Naive thymus-derived CD4-positive, alpha-beta T cell (primary cell): ENCODE measurements at regions of chr2 and their contacts with region 1.

Region 1: DNA sequence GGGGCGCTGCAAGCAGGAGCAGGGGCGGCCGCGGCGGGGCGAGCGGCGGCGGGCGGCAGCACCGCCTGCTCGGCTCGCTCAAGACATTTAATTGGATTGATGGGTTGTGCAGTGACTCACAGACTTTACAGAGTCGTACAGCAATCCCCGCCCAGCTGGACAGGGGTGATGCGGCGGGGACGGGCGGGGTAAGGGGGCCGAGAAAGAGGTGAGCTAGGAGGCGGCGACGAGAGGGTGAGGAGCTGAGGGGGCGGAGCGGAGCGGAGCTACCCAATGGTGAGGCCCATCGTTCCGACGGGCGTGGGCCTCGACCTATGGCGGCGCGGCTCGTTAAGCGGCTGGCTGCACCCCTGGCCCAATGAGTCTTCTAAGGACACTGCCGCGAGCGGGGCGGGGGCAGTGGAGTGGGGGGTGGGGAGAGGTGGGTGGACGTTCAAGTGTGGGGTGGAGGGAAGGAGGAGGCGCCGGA is 97.1 kb upstream of the SERTAD2 start:
- DNase-seq: peak in 8 of 9 donors; percentile 87 to 97 (median 96)
- ATAC-seq: peak; percentile 90
- H3K4me3 ChIP-seq: peak overlapping the region; percentile 98
- H3K4me3 Mint-ChIP-seq: peak overlapping the region; percentile 91 to 100 (median 99)
- H3K27ac ChIP-seq: peak overlapping the region; percentile 91
- H3K27ac Mint-ChIP-seq: peak overlapping the region; percentile 91 to 99 (median 96)
- H3K4me1 ChIP-seq: peaks cover 3 to 13% of the 10 kb centered on the region in 2 donors
- H3K4me1 Mint-ChIP-seq: peaks cover 5 to 34% (median 29%) of the 10 kb centered on the region in 7 donors
- H3K27me3 ChIP-seq: no peaks in the 10 kb centered on the region
- H3K27me3 Mint-ChIP-seq: no peaks in the 10 kb centered on the region

Region 2: GRCh38 chr2:64144057-64145013 is 606.5 kb before region 1 on chr2 and contains the start of gene PELI1:
- CTCF ChIA-PET with region 1: no interaction called
- POLR2A ChIA-PET with region 1: no interaction called
- intact Hi-C with region 1: loop called (anchors 1 to 2 kb)
- DNase-seq: peak; percentile 82 to 95 (median 88)
- ATAC-seq: peak; percentile 97
- H3K4me3 ChIP-seq: peak within 1 kb of the TSS; percentile 88
- H3K4me3 Mint-ChIP-seq: peak within 1 kb of the TSS in 9 of 10 donors; percentile 87 to 98 (median 93)
- H3K27ac ChIP-seq: peak within 1 kb of the TSS; percentile 98
- H3K27ac Mint-ChIP-seq: peak within 1 kb of the TSS; percentile 93 to 99 (median 96)
- H3K4me1 ChIP-seq: peaks cover 11 to 24% of the 10 kb centered on the region in 2 donors
- H3K4me1 Mint-ChIP-seq: peaks cover 19 to 33% (median 31%) of the 10 kb centered on the region in 7 donors
- H3K27me3 ChIP-seq: no peaks in the 10 kb centered on the region
- H3K27me3 Mint-ChIP-seq: no peaks in the 10 kb centered on the region
- total RNA-seq, gene PELI1: 33.4 to 170 (median 57.2) TPM

Region 3: GRCh38 chr2:64295326-64296139 is 455.3 kb before region 1 on chr2:
- CTCF ChIA-PET with region 1: no interaction called
- POLR2A ChIA-PET with region 1: no interaction called
- intact Hi-C with region 1: no loop called
- DNase-seq: peak in 1 of 9 donors; percentile 45
- ATAC-seq: no peak
- H3K4me3 ChIP-seq: no peak overlapping the region
- H3K4me3 Mint-ChIP-seq: no peak overlapping the region
- H3K27ac ChIP-seq: no peak overlapping the region
- H3K27ac Mint-ChIP-seq: peak overlapping the region in 1 of 9 donors; percentile 9
- H3K4me1 ChIP-seq: no peaks in the 10 kb centered on the region
- H3K4me1 Mint-ChIP-seq: peaks cover 0 to 16% (median 4%) of the 10 kb centered on the region in 7 donors
- H3K27me3 ChIP-seq: no peaks in the 10 kb centered on the region
- H3K27me3 Mint-ChIP-seq: peaks cover 0 to 22% (median 4%) of the 10 kb centered on the region in 5 donors

Region 4: GRCh38 chr2:64666810-64667438 is 83.9 kb before region 1 on chr2:
- CTCF ChIA-PET with region 1: interaction called, 6 read pairs
- POLR2A ChIA-PET with region 1: interaction called, 66 read pairs
- intact Hi-C with region 1: no loop called
- DNase-seq: peak in 3 of 9 donors; percentile 43 to 51 (median 51)
- ATAC-seq: peak; percentile 61
- H3K4me3 ChIP-seq: peak overlapping the region; percentile 12
- H3K4me3 Mint-ChIP-seq: peak overlapping the region in 9 of 10 donors; percentile 3 to 76 (median 64)
- H3K27ac ChIP-seq: peak overlapping the region; percentile 58
- H3K27ac Mint-ChIP-seq: peak overlapping the region in 3 of 9 donors; percentile 71 to 91 (median 85)
- H3K4me1 ChIP-seq: peaks cover 15 to 55% of the 10 kb centered on the region in 2 donors
- H3K4me1 Mint-ChIP-seq: peaks cover 28 to 46% (median 35%) of the 10 kb centered on the region in 7 donors
- H3K27me3 ChIP-seq: no peaks in the 10 kb centered on the region
- H3K27me3 Mint-ChIP-seq: no peaks in the 10 kb centered on the region

Region 5: GRCh38 chr2:64738026-64738425 is 12.8 kb before region 1 on chr2:
- CTCF ChIA-PET with region 1: interaction called, 5 read pairs
- POLR2A ChIA-PET with region 1: interaction called, 23 read pairs
- intact Hi-C with region 1: loop called (anchors 1 kb)
- DNase-seq: no peak
- ATAC-seq: no peak
- H3K4me3 ChIP-seq: no peak overlapping the region
- H3K4me3 Mint-ChIP-seq: peak overlapping the region in 1 of 10 donors; percentile 24
- H3K27ac ChIP-seq: no peak overlapping the region
- H3K27ac Mint-ChIP-seq: peak overlapping the region in 3 of 9 donors; percentile 2 to 72 (median 18)
- H3K4me1 ChIP-seq: no peaks in the 10 kb centered on the region
- H3K4me1 Mint-ChIP-seq: peaks cover 4 to 45% (median 37%) of the 10 kb centered on the region in 7 donors
- H3K27me3 ChIP-seq: no peaks in the 10 kb centered on the region
- H3K27me3 Mint-ChIP-seq: no peaks in the 10 kb centered on the region

Region 6: GRCh38 chr2:64865073-64865830 is 114.4 kb after region 1 on chr2:
- CTCF ChIA-PET with region 1: interaction called, 3 read pairs
- POLR2A ChIA-PET with region 1: no interaction called
- intact Hi-C with region 1: loop called (anchors 1 to 2 kb)
- DNase-seq: peak; percentile 30 to 82 (median 72)
- ATAC-seq: peak; percentile 87
- H3K4me3 ChIP-seq: peak overlapping the region; percentile 88
- H3K4me3 Mint-ChIP-seq: peak overlapping the region in 7 of 10 donors; percentile 72 to 86 (median 81)
- H3K27ac ChIP-seq: peak overlapping the region; percentile 40
- H3K27ac Mint-ChIP-seq: no peak overlapping the region
- H3K4me1 ChIP-seq: peaks cover 0 to 5% of the 10 kb centered on the region in 2 donors
- H3K4me1 Mint-ChIP-seq: peaks cover 0 to 5% (median 0%) of the 10 kb centered on the region in 7 donors
- H3K27me3 ChIP-seq: peaks cover 0 to 3% of the 10 kb centered on the region in 2 donors
- H3K27me3 Mint-ChIP-seq: peaks cover 0 to 17% (median 8%) of the 10 kb centered on the region in 5 donors

Region 7: GRCh38 chr2:65013775-65014174 is 262.9 kb after region 1 on chr2:
- CTCF ChIA-PET with region 1: no interaction called
- POLR2A ChIA-PET with region 1: no interaction called
- intact Hi-C with region 1: no loop called
- DNase-seq: no peak
- ATAC-seq: no peak
- H3K4me3 ChIP-seq: no peak overlapping the region
- H3K4me3 Mint-ChIP-seq: no peak overlapping the region
- H3K27ac ChIP-seq: no peak overlapping the region
- H3K27ac Mint-ChIP-seq: no peak overlapping the region
- H3K4me1 ChIP-seq: no peaks in the 10 kb centered on the region
- H3K4me1 Mint-ChIP-seq: peaks cover 0 to 24% (median 8%) of the 10 kb centered on the region in 7 donors
- H3K27me3 ChIP-seq: no peaks in the 10 kb centered on the region
- H3K27me3 Mint-ChIP-seq: no peaks in the 10 kb centered on the region

Region 8: DNA sequence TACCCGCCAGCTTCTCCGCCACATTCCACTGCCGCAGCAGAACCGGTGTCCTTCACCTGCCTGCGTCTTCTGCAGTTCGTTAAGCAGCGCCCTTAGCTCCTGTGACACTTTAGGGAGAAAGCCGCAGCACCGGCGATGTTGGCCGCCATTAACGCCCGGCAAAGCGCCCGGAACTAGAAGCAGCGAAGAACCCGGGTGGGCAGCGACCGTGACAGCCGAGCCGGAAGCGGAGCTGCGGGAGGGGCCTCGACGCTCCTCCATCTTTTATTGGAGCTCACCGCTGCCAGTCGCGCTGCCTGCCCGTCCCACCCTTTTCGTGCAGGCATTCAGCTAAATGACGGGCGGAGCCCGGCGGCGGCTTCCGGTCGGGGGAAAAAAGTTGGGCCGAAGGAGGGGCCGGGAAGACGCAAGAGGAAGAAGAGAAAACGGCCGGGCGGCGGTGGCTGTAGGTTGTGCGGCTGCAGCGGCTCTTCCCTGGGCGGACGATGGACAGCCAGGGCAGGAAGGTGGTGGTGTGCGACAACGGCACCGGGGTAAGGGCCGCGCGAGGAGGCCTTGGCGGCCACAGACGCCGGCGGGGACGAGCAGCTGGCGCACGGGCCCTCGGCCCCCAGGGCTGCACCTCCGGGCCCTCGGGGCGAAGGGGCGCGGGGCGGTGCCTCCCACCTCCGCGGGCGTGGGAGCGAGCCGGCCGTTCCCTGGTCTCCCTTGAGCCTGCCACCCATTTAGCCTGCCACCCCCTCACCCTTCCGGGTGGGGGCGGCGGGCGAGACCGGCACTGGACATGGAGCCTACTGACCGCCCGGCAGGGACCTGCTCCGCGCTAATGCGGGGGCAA is 476.8 kb after region 1 on chr2 and contains the start of gene ACTR2:
- CTCF ChIA-PET with region 1: no interaction called
- POLR2A ChIA-PET with region 1: no interaction called
- intact Hi-C with region 1: loop called (anchors 1 to 5 kb)
- DNase-seq: peak; percentile 86 to 94 (median 93)
- ATAC-seq: peak; percentile 97
- H3K4me3 ChIP-seq: peak within 1 kb of the TSS; percentile 99
- H3K4me3 Mint-ChIP-seq: peak within 1 kb of the TSS; percentile 95 to 100 (median 98)
- H3K27ac ChIP-seq: peak within 1 kb of the TSS; percentile 97
- H3K27ac Mint-ChIP-seq: peak within 1 kb of the TSS; percentile 97 to 99 (median 98)
- H3K4me1 ChIP-seq: peaks cover 25 to 38% of the 10 kb centered on the region in 2 donors
- H3K4me1 Mint-ChIP-seq: peaks cover 24 to 54% (median 44%) of the 10 kb centered on the region in 7 donors
- H3K27me3 ChIP-seq: no peaks in the 10 kb centered on the region
- H3K27me3 Mint-ChIP-seq: no peaks in the 10 kb centered on the region
- total RNA-seq, gene ACTR2: 180 to 435 (median 287) TPM